Ovary (tissue), 10 donors: ENCODE measurements at regions of chr12 and their contacts with region 1.

Region 1: DNA sequence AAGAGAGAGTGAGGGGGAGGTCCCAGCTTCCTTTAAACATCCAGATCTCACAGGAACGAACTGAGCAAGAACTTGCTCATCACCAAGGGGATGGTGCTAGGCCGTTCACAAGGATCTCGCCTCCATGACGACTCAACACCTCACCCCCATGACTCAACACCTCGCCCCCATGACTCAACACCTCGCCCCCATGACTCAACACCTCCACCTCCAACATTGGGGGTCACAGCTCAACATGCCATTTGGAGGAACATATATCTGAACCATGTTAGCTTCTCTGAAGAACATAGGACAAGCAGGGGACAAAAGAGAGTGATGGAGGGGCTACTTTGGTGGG is 66.0 kb upstream of the LHX5 start:
- DNase-seq: no peak
- H3K4me3 ChIP-seq: no peak overlapping the region
- H3K27ac ChIP-seq: no peak overlapping the region
- H3K4me1 ChIP-seq: no peaks in the 10 kb centered on the region
- H3K27me3 ChIP-seq: no peaks in the 10 kb centered on the region
- CTCF ChIP-seq: no peak
- EP300 ChIP-seq: no peak
- POLR2A ChIP-seq: no peak

Region 2: DNA sequence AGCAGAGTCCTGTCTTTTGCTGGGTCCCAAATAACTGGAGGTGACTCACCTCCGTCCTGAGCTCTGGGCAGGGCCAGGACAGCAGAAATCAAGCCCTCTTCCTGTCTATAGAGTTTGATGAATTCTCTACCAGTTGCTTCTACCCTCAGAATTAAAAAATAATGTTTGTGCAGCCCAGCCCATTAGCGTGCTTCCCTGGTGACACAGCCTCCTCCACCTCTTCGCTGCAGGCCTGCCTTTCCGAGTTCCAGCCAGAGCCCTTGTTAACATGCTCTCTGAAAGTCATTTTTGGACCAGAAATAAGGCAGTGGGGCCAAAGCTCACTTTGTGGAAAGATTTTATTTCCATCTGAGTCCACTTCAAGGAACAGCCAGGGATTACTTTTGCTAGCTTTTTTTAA is 774.3 kb after region 1 on chr12:
- intact Hi-C with region 1: loop called in 1 of 4 experiments (anchors 5 kb)
- DNase-seq: no peak
- H3K4me3 ChIP-seq: no peak overlapping the region
- H3K27ac ChIP-seq: no peak overlapping the region
- H3K4me1 ChIP-seq: no peaks in the 10 kb centered on the region
- H3K27me3 ChIP-seq: no peaks in the 10 kb centered on the region
- CTCF ChIP-seq: no peak
- EP300 ChIP-seq: no peak
- POLR2A ChIP-seq: no peak